Panc1 (cell line): ENCODE measurements at regions of chr4 and their contacts with region 1.

Region 1: GRCh38 chr4:169540774-169541173 is 71.6 kb downstream of the NEK1 start:
- DNase-seq: no peak
- ATAC-seq: no peak
- H3K4me3 ChIP-seq: no peak overlapping the region
- H3K27ac ChIP-seq: no peak overlapping the region
- H3K4me1 ChIP-seq: no peaks in the 10 kb centered on the region
- H3K27me3 ChIP-seq: no peaks in the 10 kb centered on the region
- CTCF ChIP-seq: no peak

Region 2: DNA sequence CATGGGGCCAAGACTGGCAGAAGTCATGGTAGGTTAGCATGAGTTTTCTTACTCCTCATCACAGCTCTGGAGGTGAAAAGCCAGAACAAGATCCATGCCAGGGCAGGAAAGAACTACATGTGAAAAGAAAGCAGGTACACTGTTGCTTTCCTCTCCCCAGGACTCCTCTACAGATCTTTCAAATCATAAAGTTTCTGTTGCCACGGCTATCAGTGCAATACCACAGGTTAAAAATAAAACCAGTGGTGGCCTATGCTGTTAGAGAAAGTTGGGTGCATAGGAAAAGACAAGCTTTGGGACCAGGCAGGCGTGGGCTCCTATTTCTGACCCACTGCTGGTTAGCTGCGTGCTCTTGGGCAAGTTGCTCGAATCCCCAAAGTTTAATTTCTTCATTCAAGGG is 351.4 kb before region 1 on chr4:
- CTCF ChIA-PET with region 1: no interaction called
- POLR2A ChIA-PET with region 1: no interaction called
- in situ Hi-C with region 1: no loop called
- intact Hi-C with region 1: no loop called
- DNase-seq: no peak
- ATAC-seq: no peak
- H3K4me3 ChIP-seq: no peak overlapping the region
- H3K27ac ChIP-seq: no peak overlapping the region
- H3K4me1 ChIP-seq: peaks cover 13% of the 10 kb centered on the region
- H3K27me3 ChIP-seq: no peaks in the 10 kb centered on the region
- CTCF ChIP-seq: no peak

Region 3: GRCh38 chr4:169582205-169582604 is 41.4 kb after region 1 on chr4:
- CTCF ChIA-PET with region 1: no interaction called
- POLR2A ChIA-PET with region 1: interaction called, 14 read pairs
- in situ Hi-C with region 1: no loop called
- intact Hi-C with region 1: no loop called
- DNase-seq: no peak
- ATAC-seq: no peak
- H3K4me3 ChIP-seq: no peak overlapping the region
- H3K27ac ChIP-seq: no peak overlapping the region
- H3K4me1 ChIP-seq: no peaks in the 10 kb centered on the region
- H3K27me3 ChIP-seq: no peaks in the 10 kb centered on the region
- CTCF ChIP-seq: no peak

Region 4: GRCh38 chr4:169707958-169708643 is 167.3 kb after region 1 on chr4:
- CTCF ChIA-PET with region 1: no interaction called
- POLR2A ChIA-PET with region 1: no interaction called
- in situ Hi-C with region 1: no loop called
- intact Hi-C with region 1: no loop called
- DNase-seq: no peak
- ATAC-seq: no peak
- H3K4me3 ChIP-seq: no peak overlapping the region
- H3K27ac ChIP-seq: no peak overlapping the region
- H3K4me1 ChIP-seq: no peaks in the 10 kb centered on the region
- H3K27me3 ChIP-seq: no peaks in the 10 kb centered on the region
- CTCF ChIP-seq: no peak